Activated CD8-positive, alpha-beta memory T cell treated with anti-CD3 and anti-CD28 coated beads, Interleukin-2, amount 10 ng/mL, durations not matched to agents 7 days and 5 days (primary cell): ENCODE measurements at regions of chr19 and their contacts with region 1.

Region 1: GRCh38 chr19:18304458-18305310 is 18.2 kb downstream of the LSM4 start:
- DNase-seq: peak; percentile 92
- ATAC-seq: peak; percentile 79
- H3K4me3 Mint-ChIP-seq: peak overlapping the region; percentile 94
- H3K27ac Mint-ChIP-seq: peak overlapping the region; percentile 99
- H3K4me1 Mint-ChIP-seq: peaks cover 40% of the 10 kb centered on the region
- H3K27me3 Mint-ChIP-seq: no peaks in the 10 kb centered on the region

Region 2: GRCh38 chr19:18233224-18233825 is 71.4 kb before region 1 on chr19:
- CTCF ChIA-PET with region 1: no interaction called
- DNase-seq: peak; percentile 72
- ATAC-seq: peak; percentile 85
- H3K4me3 Mint-ChIP-seq: no peak overlapping the region
- H3K27ac Mint-ChIP-seq: no peak overlapping the region
- H3K4me1 Mint-ChIP-seq: peaks cover 4% of the 10 kb centered on the region
- H3K27me3 Mint-ChIP-seq: peaks cover 54% of the 10 kb centered on the region

Region 3: DNA sequence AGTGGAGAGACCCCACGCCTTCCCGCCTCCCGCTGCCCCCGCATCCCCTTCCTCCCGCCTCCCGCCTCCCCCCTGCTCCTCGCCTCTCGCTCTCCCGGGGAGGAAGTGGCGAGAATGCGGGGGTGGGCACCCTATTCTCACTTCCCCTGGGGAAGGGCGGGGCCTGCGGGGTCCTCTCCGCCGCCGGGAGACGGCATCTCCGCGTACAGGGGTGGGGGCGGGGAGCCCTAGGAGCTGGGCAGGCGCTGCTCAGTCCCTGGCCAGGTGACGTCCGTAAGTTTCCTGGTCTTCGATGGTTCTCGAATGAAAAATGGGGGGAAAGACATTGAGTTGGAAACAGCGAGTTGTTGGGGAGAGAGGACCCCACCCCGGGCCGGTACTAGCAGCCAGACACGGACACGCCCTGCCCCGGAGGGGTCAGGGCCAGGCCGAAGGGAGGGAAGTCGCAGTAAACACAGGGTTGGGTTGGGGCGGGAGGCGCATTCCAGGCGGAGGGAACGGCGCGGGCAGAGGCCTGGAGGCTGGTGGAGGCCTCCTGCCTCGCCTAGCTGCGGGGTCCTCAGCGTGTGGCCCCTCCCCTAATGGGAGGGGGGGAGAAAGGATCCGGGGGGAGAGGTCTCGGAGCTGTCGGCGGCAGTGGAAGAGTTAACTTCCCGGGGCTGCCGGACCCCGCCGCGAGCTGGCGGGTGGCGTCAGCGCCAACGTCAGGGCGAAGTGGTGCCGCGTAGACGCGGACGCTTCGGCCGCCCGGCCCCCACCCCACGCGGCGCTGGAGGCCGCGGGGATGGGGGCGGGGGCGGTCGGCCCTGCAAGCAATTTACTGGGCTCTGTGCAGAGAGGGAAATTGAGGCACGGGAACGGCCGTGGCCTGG is 12.9 kb before region 1 on chr19:
- CTCF ChIA-PET with region 1: interaction called, 52 read pairs
- DNase-seq: peak; percentile 94
- ATAC-seq: peak; percentile 38
- H3K4me3 Mint-ChIP-seq: peak overlapping the region; percentile 91
- H3K27ac Mint-ChIP-seq: peak overlapping the region; percentile 98
- H3K4me1 Mint-ChIP-seq: peaks cover 67% of the 10 kb centered on the region
- H3K27me3 Mint-ChIP-seq: no peaks in the 10 kb centered on the region